ENCODE measurements at regions of chr16 and their contacts with region 1.

Region 1: DNA sequence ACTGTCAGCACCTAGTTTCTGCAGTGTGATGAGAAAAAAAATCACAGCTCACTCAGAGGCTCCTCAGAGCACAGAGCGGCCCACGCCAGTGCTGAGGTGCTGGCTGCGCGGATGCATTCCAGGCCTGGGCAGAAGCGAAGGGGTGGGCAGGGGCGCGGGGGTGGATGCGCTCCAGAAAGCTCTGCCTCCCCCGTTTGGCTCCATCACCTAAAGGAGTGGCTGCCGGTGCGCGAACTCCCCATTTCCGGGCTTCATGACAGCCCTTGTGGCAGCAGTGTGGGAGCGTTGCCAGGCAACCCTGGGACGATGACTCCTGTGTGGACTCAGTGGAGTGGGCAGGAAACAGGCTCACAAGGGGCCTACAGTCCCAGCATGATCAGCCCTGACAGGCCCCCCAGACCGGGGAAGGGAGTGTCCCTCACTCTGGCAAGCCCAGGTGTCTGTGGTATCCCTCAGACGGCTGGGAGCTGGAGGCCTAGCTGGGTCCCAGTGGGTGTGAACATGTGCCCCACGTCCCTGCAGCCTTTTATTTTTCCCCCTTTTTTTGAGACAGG is 32.8 kb upstream of the NUDT16L1 start:
- DNase-seq: peak; percentile 73
- H3K4me3 Mint-ChIP-seq: no peak overlapping the region
- H3K27ac Mint-ChIP-seq: peak overlapping the region; percentile 55
- H3K4me1 Mint-ChIP-seq: peaks cover 56% of the 10 kb centered on the region
- H3K27me3 Mint-ChIP-seq: no peaks in the 10 kb centered on the region

Region 2: DNA sequence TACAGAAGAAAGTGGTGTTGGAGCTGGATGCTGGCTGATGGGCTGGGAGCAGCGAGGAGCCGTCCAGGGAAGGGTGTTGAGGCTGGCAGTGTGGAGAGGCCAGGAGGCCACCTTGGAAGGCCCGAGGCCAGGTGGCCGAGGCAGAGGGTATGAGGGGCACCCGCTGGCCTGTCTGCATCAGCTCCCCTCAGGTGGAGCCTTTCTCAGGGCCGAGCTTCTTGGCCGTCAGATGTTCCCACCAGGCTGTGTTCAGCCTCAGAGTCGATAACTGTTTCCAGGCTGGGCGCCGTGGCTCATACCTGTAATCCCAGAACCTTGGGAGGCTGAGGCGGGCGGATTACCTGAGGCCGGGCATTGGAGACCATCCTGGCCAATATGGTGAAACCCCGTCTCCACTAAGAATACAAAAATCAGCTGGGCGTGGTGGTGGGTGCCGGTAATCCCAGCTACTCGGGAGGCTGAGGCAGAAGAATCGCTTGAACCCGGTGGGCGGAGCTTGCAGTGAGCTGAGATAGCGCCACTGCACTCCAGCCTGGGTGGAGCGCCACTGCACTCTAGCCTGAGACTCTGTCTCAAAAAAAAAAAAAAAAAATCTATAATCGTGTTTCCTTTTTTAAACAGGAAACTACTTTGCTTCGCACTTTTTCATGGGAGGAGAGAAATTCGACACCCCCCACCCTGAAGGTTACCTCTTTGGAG is 10.6 kb before region 1 on chr16:
- CTCF ChIA-PET with region 1: interaction called, 14 read pairs
- POLR2A ChIA-PET with region 1: interaction called, 4 read pairs
- DNase-seq: peak; percentile 35
- H3K4me3 Mint-ChIP-seq: no peak overlapping the region
- H3K27ac Mint-ChIP-seq: peak overlapping the region; percentile 31
- H3K4me1 Mint-ChIP-seq: peaks cover 22% of the 10 kb centered on the region
- H3K27me3 Mint-ChIP-seq: no peaks in the 10 kb centered on the region

Region 3: GRCh38 chr16:4675864-4676786 is 15.6 kb after region 1 on chr16:
- CTCF ChIA-PET with region 1: no interaction called
- POLR2A ChIA-PET with region 1: interaction called, 11 read pairs
- DNase-seq: peak; percentile 89
- H3K4me3 Mint-ChIP-seq: peak overlapping the region; percentile 62
- H3K27ac Mint-ChIP-seq: peak overlapping the region; percentile 100
- H3K4me1 Mint-ChIP-seq: peaks cover 33% of the 10 kb centered on the region
- H3K27me3 Mint-ChIP-seq: no peaks in the 10 kb centered on the region

Region 4: GRCh38 chr16:4723071-4723767 is 62.7 kb after region 1 on chr16:
- CTCF ChIA-PET with region 1: no interaction called
- POLR2A ChIA-PET with region 1: no interaction called
- DNase-seq: no peak
- H3K4me3 Mint-ChIP-seq: no peak overlapping the region
- H3K27ac Mint-ChIP-seq: no peak overlapping the region
- H3K4me1 Mint-ChIP-seq: no peaks in the 10 kb centered on the region
- H3K27me3 Mint-ChIP-seq: no peaks in the 10 kb centered on the region

Measured in activated CD4-positive, alpha-beta memory T cell treated with anti-CD3 and anti-CD28 coated beads, Interleukin-2, amount 10 ng/mL, durations not matched to agents 7 days and 5 days (primary cell).